Activated B cell treated with CpG ODN at 0.5 μM for 24 hours (primary cell): ENCODE measurements at regions of chr7 and their contacts with region 1.

Region 1: GRCh38 chr7:139777948-139778841 is at the start of gene HIPK2:
- DNase-seq: peak; percentile 71
- ATAC-seq: peak; percentile 81
- H3K4me3 Mint-ChIP-seq: peak within 1 kb of the TSS; percentile 99
- H3K27ac Mint-ChIP-seq: peak within 1 kb of the TSS; percentile 94
- H3K4me1 Mint-ChIP-seq: peaks cover 39% of the 10 kb centered on the region
- H3K27me3 Mint-ChIP-seq: peaks cover 3% of the 10 kb centered on the region
- CTCF ChIP-seq: no peak
- total RNA-seq, gene HIPK2: 21.1 and 23.0 TPM in 2 replicates

Region 2: GRCh38 chr7:139714163-139714901 is 63.9 kb before region 1 on chr7:
- CTCF ChIA-PET with region 1: no interaction called
- POLR2A ChIA-PET with region 1: no interaction called
- intact Hi-C with region 1: loop called (anchors 1 kb)
- DNase-seq: peak; percentile 42
- ATAC-seq: peak; percentile 98
- H3K4me3 Mint-ChIP-seq: peak overlapping the region; percentile 75
- H3K27ac Mint-ChIP-seq: peak overlapping the region; percentile 82
- H3K4me1 Mint-ChIP-seq: peaks cover 28% of the 10 kb centered on the region
- H3K27me3 Mint-ChIP-seq: no peaks in the 10 kb centered on the region
- CTCF ChIP-seq: no peak

Region 3: GRCh38 chr7:139915864-139916716 is 137.9 kb after region 1 on chr7:
- CTCF ChIA-PET with region 1: no interaction called
- POLR2A ChIA-PET with region 1: interaction called, 4 read pairs
- intact Hi-C with region 1: loop called (anchors 1 kb)
- DNase-seq: peak; percentile 31
- ATAC-seq: peak; percentile 87
- H3K4me3 Mint-ChIP-seq: peak overlapping the region; percentile 58
- H3K27ac Mint-ChIP-seq: peak overlapping the region; percentile 81
- H3K4me1 Mint-ChIP-seq: peaks cover 26% of the 10 kb centered on the region
- H3K27me3 Mint-ChIP-seq: no peaks in the 10 kb centered on the region
- CTCF ChIP-seq: no peak

Region 4: GRCh38 chr7:140230861-140231770 is 452.9 kb after region 1 on chr7:
- CTCF ChIA-PET with region 1: no interaction called
- POLR2A ChIA-PET with region 1: no interaction called
- intact Hi-C with region 1: loop called (anchors 5 kb)
- DNase-seq: no peak
- ATAC-seq: peak; percentile 30
- H3K4me3 Mint-ChIP-seq: peak overlapping the region; percentile 91
- H3K27ac Mint-ChIP-seq: peak overlapping the region; percentile 95
- H3K4me1 Mint-ChIP-seq: peaks cover 59% of the 10 kb centered on the region
- H3K27me3 Mint-ChIP-seq: no peaks in the 10 kb centered on the region
- CTCF ChIP-seq: no peak

Region 5: GRCh38 chr7:140342727-140343514 is 564.7 kb after region 1 on chr7:
- CTCF ChIA-PET with region 1: no interaction called
- POLR2A ChIA-PET with region 1: no interaction called
- intact Hi-C with region 1: loop called (anchors 5 kb)
- DNase-seq: no peak
- ATAC-seq: no peak
- H3K4me3 Mint-ChIP-seq: no peak overlapping the region
- H3K27ac Mint-ChIP-seq: no peak overlapping the region
- H3K4me1 Mint-ChIP-seq: peaks cover 4% of the 10 kb centered on the region
- H3K27me3 Mint-ChIP-seq: no peaks in the 10 kb centered on the region
- CTCF ChIP-seq: no peak